Activated CD8-positive, alpha-beta T cell treated with anti-CD3 and anti-CD28 coated beads for 36 hours (primary cell): ENCODE measurements at regions of chr13 and their contacts with region 1.

Region 1: GRCh38 chr13:32586080-32586900 is at the start of gene PDS5B:
- DNase-seq: peak; percentile 93
- ATAC-seq: peak; percentile 93
- H3K4me3 Mint-ChIP-seq: peak within 1 kb of the TSS; percentile 81
- H3K27ac Mint-ChIP-seq: peak within 1 kb of the TSS; percentile 91
- H3K4me1 Mint-ChIP-seq: peaks cover 35% of the 10 kb centered on the region
- H3K27me3 Mint-ChIP-seq: peaks cover 3% of the 10 kb centered on the region
- CTCF ChIP-seq: peak; percentile 78
- total RNA-seq, gene PDS5B: 44.1 to 46.6 TPM

Region 2: DNA sequence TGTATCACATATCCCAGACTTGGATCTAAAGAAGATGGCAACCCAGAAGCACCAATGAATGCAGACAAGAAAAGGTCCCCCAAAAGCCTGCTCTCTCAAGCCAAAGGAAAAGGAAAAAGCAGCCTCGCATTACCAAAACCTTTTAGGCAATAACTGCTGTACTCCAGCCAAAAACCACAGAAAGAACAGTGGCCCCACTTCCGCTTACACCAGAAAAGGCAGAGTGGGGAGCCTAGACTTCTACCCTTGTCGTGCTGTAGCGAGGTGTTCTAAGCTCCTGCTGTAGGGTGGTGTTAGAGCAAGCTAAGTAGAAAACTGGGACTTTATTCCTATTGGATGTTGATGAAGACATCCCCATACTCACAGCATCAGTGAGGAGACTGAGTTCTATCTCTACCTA is 1091.0 kb before region 1 on chr13:
- CTCF ChIA-PET with region 1: no interaction called
- POLR2A ChIA-PET with region 1: no interaction called
- intact Hi-C with region 1: no loop called
- DNase-seq: no peak
- ATAC-seq: no peak
- H3K4me3 Mint-ChIP-seq: no peak overlapping the region
- H3K27ac Mint-ChIP-seq: no peak overlapping the region
- H3K4me1 Mint-ChIP-seq: no peaks in the 10 kb centered on the region
- H3K27me3 Mint-ChIP-seq: no peaks in the 10 kb centered on the region
- CTCF ChIP-seq: no peak

Region 3: GRCh38 chr13:32650705-32651311 is 64.5 kb after region 1 on chr13:
- CTCF ChIA-PET with region 1: interaction called, 31 read pairs
- POLR2A ChIA-PET with region 1: interaction called, 5 read pairs
- intact Hi-C with region 1: loop called (anchors 1 kb)
- DNase-seq: peak; percentile 82
- ATAC-seq: peak; percentile 90
- H3K4me3 Mint-ChIP-seq: no peak overlapping the region
- H3K27ac Mint-ChIP-seq: peak overlapping the region; percentile 64
- H3K4me1 Mint-ChIP-seq: peaks cover 44% of the 10 kb centered on the region
- H3K27me3 Mint-ChIP-seq: no peaks in the 10 kb centered on the region
- CTCF ChIP-seq: peak; percentile 82

Region 4: GRCh38 chr13:32669030-32669646 is 82.8 kb after region 1 on chr13:
- CTCF ChIA-PET with region 1: interaction called, 28 read pairs
- POLR2A ChIA-PET with region 1: no interaction called
- intact Hi-C with region 1: no loop called
- DNase-seq: peak; percentile 21
- ATAC-seq: peak; percentile 56
- H3K4me3 Mint-ChIP-seq: no peak overlapping the region
- H3K27ac Mint-ChIP-seq: no peak overlapping the region
- H3K4me1 Mint-ChIP-seq: peaks cover 7% of the 10 kb centered on the region
- H3K27me3 Mint-ChIP-seq: no peaks in the 10 kb centered on the region
- CTCF ChIP-seq: peak; percentile 56

Region 5: DNA sequence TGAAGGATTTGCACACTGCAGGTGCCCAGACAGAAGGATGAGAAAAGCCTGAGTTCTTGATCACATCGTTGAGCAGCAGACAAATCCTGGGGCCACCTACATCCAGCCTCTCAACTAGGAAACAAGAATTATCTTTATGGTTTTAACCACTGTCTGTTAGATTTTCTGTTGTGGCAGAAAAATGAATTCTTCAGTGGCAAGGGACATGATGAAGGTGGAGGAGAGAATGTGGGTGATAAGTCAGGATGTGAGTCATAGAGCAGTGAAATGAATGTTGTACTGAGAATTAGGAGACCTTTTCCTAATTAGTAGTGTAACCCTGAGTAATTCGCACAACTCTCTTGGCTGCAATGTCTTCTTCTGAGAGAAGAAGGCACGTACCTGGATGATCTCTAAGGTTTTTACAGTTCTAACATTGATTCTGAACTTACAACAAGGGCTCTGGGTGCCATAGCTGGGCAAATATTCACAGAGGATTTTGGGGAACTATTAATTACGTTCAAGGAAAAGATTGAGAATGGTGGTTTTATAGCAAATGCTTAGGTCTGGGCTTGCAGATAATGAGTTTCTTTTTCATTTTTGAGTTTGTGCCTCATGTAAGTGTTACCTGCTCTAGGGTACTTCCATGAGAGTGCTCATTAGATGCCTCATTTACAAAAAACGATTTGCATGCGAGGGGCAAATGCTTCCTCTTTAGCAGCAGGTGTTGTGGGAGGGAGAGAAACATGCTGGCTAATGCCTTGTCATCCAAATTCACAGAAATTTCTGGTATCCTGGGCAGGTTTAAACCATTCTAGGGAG is 319.0 kb after region 1 on chr13:
- CTCF ChIA-PET with region 1: no interaction called
- POLR2A ChIA-PET with region 1: no interaction called
- intact Hi-C with region 1: loop called (anchors 10 kb)
- DNase-seq: peak; percentile 38
- ATAC-seq: peak; percentile 94
- H3K4me3 Mint-ChIP-seq: peak overlapping the region; percentile 65
- H3K27ac Mint-ChIP-seq: peak overlapping the region; percentile 95
- H3K4me1 Mint-ChIP-seq: peaks cover 23% of the 10 kb centered on the region
- H3K27me3 Mint-ChIP-seq: peaks cover 2% of the 10 kb centered on the region
- CTCF ChIP-seq: no peak

Region 6: DNA sequence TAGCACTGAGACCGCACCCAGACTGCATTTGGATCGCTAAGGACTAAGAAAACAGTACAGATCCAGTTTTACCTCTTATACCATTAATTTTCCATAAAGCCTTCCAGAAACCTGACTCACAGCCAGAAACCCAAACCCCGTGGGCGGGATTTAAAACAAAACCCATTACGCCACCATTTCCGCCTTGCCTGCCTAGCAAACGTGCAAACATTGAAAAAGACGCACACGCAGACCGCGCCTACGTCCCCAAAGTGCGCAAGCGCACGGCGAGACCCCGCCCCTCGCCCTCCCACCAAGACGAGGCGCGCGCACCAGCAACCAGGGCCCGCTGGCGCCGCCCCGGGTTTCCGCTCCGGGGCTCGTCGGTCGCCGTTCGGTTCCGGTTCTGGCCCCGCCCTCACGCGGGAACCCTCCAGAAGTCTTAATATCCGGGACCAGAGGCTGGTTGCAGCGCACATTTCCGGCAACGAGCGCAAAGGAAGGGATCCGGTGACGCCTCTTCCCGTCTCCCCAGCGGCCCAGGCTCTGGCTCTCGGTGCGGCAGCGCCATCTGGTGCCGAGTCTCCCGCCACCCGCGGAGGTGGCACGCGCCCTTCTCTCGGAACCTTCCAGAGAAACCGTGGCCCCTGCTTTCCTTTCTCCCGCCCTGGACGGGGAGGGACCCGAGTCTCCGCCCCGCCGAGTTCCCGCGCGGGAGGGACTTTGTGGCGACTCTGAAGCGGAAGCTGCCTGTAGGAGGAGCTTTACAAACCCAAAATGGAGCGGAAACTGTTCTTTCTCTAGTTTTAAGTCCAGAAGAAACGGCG is 956.2 kb after region 1 on chr13:
- CTCF ChIA-PET with region 1: interaction called, 3 read pairs
- POLR2A ChIA-PET with region 1: no interaction called
- intact Hi-C with region 1: loop called (anchors 10 kb)
- DNase-seq: peak; percentile 98
- ATAC-seq: peak; percentile 85
- H3K4me3 Mint-ChIP-seq: peak overlapping the region; percentile 81
- H3K27ac Mint-ChIP-seq: peak overlapping the region; percentile 99
- H3K4me1 Mint-ChIP-seq: peaks cover 51% of the 10 kb centered on the region
- H3K27me3 Mint-ChIP-seq: no peaks in the 10 kb centered on the region
- CTCF ChIP-seq: peak; percentile 74